ENCODE measurements at regions of chr14 and their contacts with region 1.

Region 1: GRCh38 chr14:77151918-77152588 is 10.5 kb upstream of the ZDHHC22 start:
- DNase-seq: peak; percentile 46
- ATAC-seq: peak; percentile 58
- H3K4me3 ChIP-seq: no peak overlapping the region
- H3K4me3 Mint-ChIP-seq: no peak overlapping the region
- H3K27ac ChIP-seq: no peak overlapping the region
- H3K27ac Mint-ChIP-seq: no peak overlapping the region
- H3K4me1 ChIP-seq: no peaks in the 10 kb centered on the region
- H3K4me1 Mint-ChIP-seq: no peaks in the 10 kb centered on the region
- H3K27me3 ChIP-seq: peaks cover 0 to 29% (median 2%) of the 10 kb centered on the region in 4 experiments
- H3K27me3 Mint-ChIP-seq: peaks cover 42% of the 10 kb centered on the region
- CTCF ChIP-seq: peak; percentile 31

Region 2: DNA sequence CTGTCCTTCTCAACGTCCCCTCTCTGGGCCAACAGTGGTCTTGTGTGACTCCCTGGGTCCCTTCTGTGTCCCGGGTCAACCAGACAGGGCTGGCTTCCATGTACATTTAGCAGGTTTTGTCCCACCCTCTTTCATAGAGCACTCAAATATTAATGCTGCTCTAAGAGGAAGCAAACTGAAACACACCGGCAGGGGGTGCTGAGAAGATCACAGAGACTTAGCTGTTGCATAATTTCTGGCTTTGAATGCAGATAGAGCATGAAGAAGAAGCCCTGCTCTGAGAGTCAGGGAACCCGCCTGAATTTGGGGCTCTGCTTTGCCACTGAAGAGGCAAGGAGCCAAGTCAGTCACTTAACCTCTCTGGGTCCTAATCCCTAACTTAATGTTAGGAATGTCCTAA is 637.4 kb before region 1 on chr14:
- CTCF ChIA-PET with region 1: no interaction called
- POLR2A ChIA-PET with region 1: no interaction called
- intact Hi-C with region 1: no loop called
- DNase-seq: no peak
- ATAC-seq: no peak
- H3K4me3 ChIP-seq: no peak overlapping the region
- H3K4me3 Mint-ChIP-seq: no peak overlapping the region
- H3K27ac ChIP-seq: no peak overlapping the region
- H3K27ac Mint-ChIP-seq: no peak overlapping the region
- H3K4me1 ChIP-seq: no peaks in the 10 kb centered on the region
- H3K4me1 Mint-ChIP-seq: no peaks in the 10 kb centered on the region
- H3K27me3 ChIP-seq: peaks cover 0 to 12% (median 0%) of the 10 kb centered on the region in 4 experiments
- H3K27me3 Mint-ChIP-seq: peaks cover 35% of the 10 kb centered on the region
- CTCF ChIP-seq: no peak

Region 3: GRCh38 chr14:77076874-77077439 is 75.1 kb before region 1 on chr14:
- CTCF ChIA-PET with region 1: no interaction called
- POLR2A ChIA-PET with region 1: no interaction called
- intact Hi-C with region 1: no loop called
- DNase-seq: no peak
- ATAC-seq: no peak
- H3K4me3 ChIP-seq: no peak overlapping the region
- H3K4me3 Mint-ChIP-seq: no peak overlapping the region
- H3K27ac ChIP-seq: no peak overlapping the region
- H3K27ac Mint-ChIP-seq: no peak overlapping the region
- H3K4me1 ChIP-seq: peaks cover 0 to 13% of the 10 kb centered on the region in 2 donors
- H3K4me1 Mint-ChIP-seq: peaks cover 12% of the 10 kb centered on the region
- H3K27me3 ChIP-seq: peaks cover 0 to 2% (median 0%) of the 10 kb centered on the region in 4 experiments
- H3K27me3 Mint-ChIP-seq: no peaks in the 10 kb centered on the region
- CTCF ChIP-seq: no peak

Region 4: DNA sequence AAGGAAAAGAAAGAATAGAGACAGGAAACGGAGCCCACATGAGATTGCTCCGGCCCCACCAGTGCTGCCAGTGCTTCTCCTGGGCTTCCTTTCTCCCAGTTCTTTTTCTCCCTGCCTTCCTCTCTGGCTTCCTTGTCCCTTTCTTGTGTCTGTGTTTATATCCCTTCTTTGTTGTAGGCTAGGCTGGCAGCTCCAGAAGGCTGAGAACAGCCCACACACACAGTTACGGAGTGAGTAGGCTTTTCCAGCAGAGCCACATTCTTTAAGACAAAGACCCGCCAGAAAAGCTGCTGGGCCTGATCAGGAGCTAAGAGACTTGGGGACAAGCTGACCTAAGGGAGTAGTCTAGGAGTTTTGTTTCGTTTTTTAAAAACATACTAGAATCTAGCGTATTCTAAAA is 41.0 kb before region 1 on chr14:
- CTCF ChIA-PET with region 1: interaction called, 39 read pairs
- POLR2A ChIA-PET with region 1: no interaction called
- intact Hi-C with region 1: loop called (anchors 2 kb)
- DNase-seq: no peak
- ATAC-seq: no peak
- H3K4me3 ChIP-seq: no peak overlapping the region
- H3K4me3 Mint-ChIP-seq: no peak overlapping the region
- H3K27ac ChIP-seq: no peak overlapping the region
- H3K27ac Mint-ChIP-seq: peak overlapping the region; percentile 26
- H3K4me1 ChIP-seq: peaks cover 4 to 5% of the 10 kb centered on the region in 2 donors
- H3K4me1 Mint-ChIP-seq: peaks cover 25% of the 10 kb centered on the region
- H3K27me3 ChIP-seq: no peaks in the 10 kb centered on the region
- H3K27me3 Mint-ChIP-seq: no peaks in the 10 kb centered on the region
- CTCF ChIP-seq: no peak

Region 5: GRCh38 chr14:77139540-77140358 is 12.3 kb before region 1 on chr14:
- CTCF ChIA-PET with region 1: interaction called, 23 read pairs
- POLR2A ChIA-PET with region 1: no interaction called
- intact Hi-C with region 1: no loop called
- DNase-seq: peak; percentile 74
- ATAC-seq: peak; percentile 69
- H3K4me3 ChIP-seq: peak overlapping the region in 3 of 5 experiments; percentile 3 to 41 (median 40)
- H3K4me3 Mint-ChIP-seq: peak overlapping the region; percentile 85
- H3K27ac ChIP-seq: no peak overlapping the region
- H3K27ac Mint-ChIP-seq: no peak overlapping the region
- H3K4me1 ChIP-seq: peaks cover 34 to 40% of the 10 kb centered on the region in 2 donors
- H3K4me1 Mint-ChIP-seq: peaks cover 26% of the 10 kb centered on the region
- H3K27me3 ChIP-seq: peaks cover 0 to 85% (median 59%) of the 10 kb centered on the region in 4 experiments
- H3K27me3 Mint-ChIP-seq: peaks cover 81% of the 10 kb centered on the region
- CTCF ChIP-seq: peak; percentile 72

Region 6: DNA sequence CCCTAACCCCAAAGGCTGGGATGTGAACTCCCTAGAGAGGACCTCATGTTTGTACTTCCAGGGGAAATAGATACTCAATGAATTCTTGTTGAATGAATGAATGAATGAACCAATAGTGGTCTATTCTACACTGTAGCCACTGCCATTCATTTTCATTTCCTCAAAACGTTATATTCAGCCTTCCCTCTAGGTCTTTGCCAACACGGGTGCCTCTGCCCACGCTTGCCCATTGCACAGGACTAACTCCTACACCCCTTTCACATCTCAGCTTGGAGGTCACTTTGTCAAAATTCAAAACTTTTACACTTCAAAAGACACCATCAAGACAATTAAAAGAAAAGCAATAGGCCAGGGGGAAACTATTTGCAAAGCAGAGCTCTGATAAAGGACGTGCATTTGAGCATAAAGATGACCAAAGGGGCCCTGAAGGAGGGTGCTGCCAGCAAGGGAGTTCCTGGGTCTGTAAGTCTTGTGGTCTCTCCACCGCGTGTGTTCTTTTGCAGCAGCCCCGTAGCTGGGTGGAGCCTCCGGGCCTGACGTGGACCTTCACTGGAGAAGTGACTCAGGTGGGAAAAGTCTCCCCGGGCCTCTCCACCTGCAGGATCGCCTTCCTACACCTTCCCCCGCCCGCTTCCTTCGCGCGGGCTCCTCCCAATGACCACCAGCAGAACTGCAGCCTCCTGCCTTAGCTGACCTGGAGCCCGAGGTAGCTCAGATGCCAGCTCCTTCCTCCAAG is 61.1 kb after region 1 on chr14:
- CTCF ChIA-PET with region 1: interaction called, 13 read pairs
- POLR2A ChIA-PET with region 1: no interaction called
- intact Hi-C with region 1: no loop called
- DNase-seq: peak; percentile 45
- ATAC-seq: peak; percentile 53
- H3K4me3 ChIP-seq: no peak overlapping the region
- H3K4me3 Mint-ChIP-seq: no peak overlapping the region
- H3K27ac ChIP-seq: no peak overlapping the region
- H3K27ac Mint-ChIP-seq: no peak overlapping the region
- H3K4me1 ChIP-seq: peaks cover 0 to 8% of the 10 kb centered on the region in 2 donors
- H3K4me1 Mint-ChIP-seq: peaks cover 6% of the 10 kb centered on the region
- H3K27me3 ChIP-seq: peaks cover 0 to 7% (median 3%) of the 10 kb centered on the region in 4 experiments
- H3K27me3 Mint-ChIP-seq: peaks cover 23% of the 10 kb centered on the region
- CTCF ChIP-seq: peak; percentile 49

Region 7: GRCh38 chr14:77224212-77224611 is 72.2 kb after region 1 on chr14:
- CTCF ChIA-PET with region 1: no interaction called
- POLR2A ChIA-PET with region 1: no interaction called
- intact Hi-C with region 1: no loop called
- DNase-seq: no peak
- ATAC-seq: no peak
- H3K4me3 ChIP-seq: no peak overlapping the region
- H3K4me3 Mint-ChIP-seq: no peak overlapping the region
- H3K27ac ChIP-seq: no peak overlapping the region
- H3K27ac Mint-ChIP-seq: no peak overlapping the region
- H3K4me1 ChIP-seq: no peaks in the 10 kb centered on the region
- H3K4me1 Mint-ChIP-seq: no peaks in the 10 kb centered on the region
- H3K27me3 ChIP-seq: peaks cover 0 to under 1% (median 0%) of the 10 kb centered on the region in 4 experiments
- H3K27me3 Mint-ChIP-seq: peaks cover 6% of the 10 kb centered on the region
- CTCF ChIP-seq: no peak

Region 8: GRCh38 chr14:77259025-77259715 is 107.1 kb after region 1 on chr14:
- CTCF ChIA-PET with region 1: no interaction called
- POLR2A ChIA-PET with region 1: no interaction called
- intact Hi-C with region 1: no loop called
- DNase-seq: no peak
- ATAC-seq: no peak
- H3K4me3 ChIP-seq: no peak overlapping the region
- H3K4me3 Mint-ChIP-seq: no peak overlapping the region
- H3K27ac ChIP-seq: no peak overlapping the region
- H3K27ac Mint-ChIP-seq: no peak overlapping the region
- H3K4me1 ChIP-seq: no peaks in the 10 kb centered on the region
- H3K4me1 Mint-ChIP-seq: no peaks in the 10 kb centered on the region
- H3K27me3 ChIP-seq: peaks cover 0 to 7% (median 0%) of the 10 kb centered on the region in 4 experiments
- H3K27me3 Mint-ChIP-seq: peaks cover 4% of the 10 kb centered on the region
- CTCF ChIP-seq: no peak

Region 9: GRCh38 chr14:77554207-77554606 is 402.2 kb after region 1 on chr14:
- CTCF ChIA-PET with region 1: interaction called, 20 read pairs
- POLR2A ChIA-PET with region 1: no interaction called
- intact Hi-C with region 1: no loop called
- DNase-seq: peak; percentile 37
- ATAC-seq: no peak
- H3K4me3 ChIP-seq: no peak overlapping the region
- H3K4me3 Mint-ChIP-seq: no peak overlapping the region
- H3K27ac ChIP-seq: peak overlapping the region; percentile 46 to 73
- H3K27ac Mint-ChIP-seq: no peak overlapping the region
- H3K4me1 ChIP-seq: peaks cover 19 to 36% of the 10 kb centered on the region in 2 donors
- H3K4me1 Mint-ChIP-seq: peaks cover 3% of the 10 kb centered on the region
- H3K27me3 ChIP-seq: no peaks in the 10 kb centered on the region
- H3K27me3 Mint-ChIP-seq: no peaks in the 10 kb centered on the region
- CTCF ChIP-seq: no peak

Measured in B cell (primary cell).